ENCODE measurements at regions of chr15 and their contacts with region 1.

Region 1: DNA sequence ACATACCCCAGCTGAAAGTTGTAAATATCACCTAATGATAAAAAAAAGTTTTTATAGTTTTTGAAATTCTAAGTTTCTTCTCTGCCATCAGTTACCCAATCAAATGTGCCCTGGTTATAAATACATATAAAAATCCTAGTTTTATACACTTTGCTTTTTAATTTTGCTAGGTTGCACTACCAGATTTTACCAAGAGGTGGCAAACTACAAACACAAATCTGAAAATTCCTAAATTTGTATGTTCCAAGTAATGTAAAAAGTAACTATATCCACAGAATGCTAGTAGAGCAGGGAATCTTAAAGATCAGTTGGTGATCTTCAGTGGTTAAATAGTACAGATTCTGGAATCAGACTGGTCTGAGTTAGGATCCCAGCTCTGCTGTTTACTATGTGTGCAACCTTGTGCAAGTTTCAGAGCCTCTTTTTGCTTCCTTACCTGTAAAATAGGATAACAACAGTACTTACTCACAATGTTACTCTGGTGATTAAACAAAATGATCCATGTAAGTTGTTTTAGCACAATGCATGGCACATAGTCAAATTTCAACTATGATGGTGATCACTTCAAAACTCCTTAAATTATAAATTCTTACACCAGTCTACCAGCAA is 11.0 kb downstream of the TRPM7 start:
- DNase-seq: no peak
- ATAC-seq: no peak
- H3K4me3 ChIP-seq: no peak overlapping the region
- H3K27ac ChIP-seq: no peak overlapping the region
- H3K4me1 ChIP-seq: peaks cover 2 to 50% (median 19%) of the 10 kb centered on the region in 9 donors
- H3K27me3 ChIP-seq: no peaks in the 10 kb centered on the region
- CTCF ChIP-seq: peak; percentile 55 to 84 (median 79)

Region 2: DNA sequence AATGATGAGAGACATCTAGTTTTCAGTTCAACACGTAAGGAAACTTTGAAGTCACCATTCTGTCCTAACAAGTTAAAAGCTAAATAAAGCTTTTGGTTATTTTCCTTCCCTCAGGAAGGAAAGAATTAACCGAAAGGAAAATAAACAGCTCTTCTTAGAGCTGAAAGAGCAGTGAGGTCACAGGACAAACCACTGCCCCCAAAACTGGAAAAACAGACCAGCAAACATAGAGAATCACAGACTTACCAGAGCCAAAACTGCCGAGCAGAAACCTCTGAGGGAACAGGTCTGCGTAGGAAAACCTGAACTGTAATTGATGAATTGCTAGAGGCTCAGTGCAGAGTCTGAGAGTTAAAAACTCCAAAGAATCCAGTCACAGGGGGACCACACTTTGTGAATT is 143.9 kb before region 1 on chr15:
- intact Hi-C with region 1: no loop called
- DNase-seq: no peak
- ATAC-seq: no peak
- H3K4me3 ChIP-seq: no peak overlapping the region
- H3K27ac ChIP-seq: no peak overlapping the region
- H3K4me1 ChIP-seq: no peaks in the 10 kb centered on the region
- H3K27me3 ChIP-seq: no peaks in the 10 kb centered on the region
- CTCF ChIP-seq: no peak

Region 3: GRCh38 chr15:50712018-50712417 is 36.4 kb after region 1 on chr15:
- intact Hi-C with region 1: loop called in 2 of 10 experiments (anchors 5 kb)
- DNase-seq: no peak
- ATAC-seq: no peak
- H3K4me3 ChIP-seq: no peak overlapping the region
- H3K27ac ChIP-seq: peak overlapping the region; percentile 11 to 90 (median 68)
- H3K4me1 ChIP-seq: peaks cover 0 to 29% (median 0%) of the 10 kb centered on the region in 9 donors
- H3K27me3 ChIP-seq: no peaks in the 10 kb centered on the region
- CTCF ChIP-seq: no peak

Region 4: GRCh38 chr15:50718700-50719125 is 43.1 kb after region 1 on chr15:
- intact Hi-C with region 1: loop called in 2 of 10 experiments (anchors 5 kb)
- DNase-seq: no peak
- ATAC-seq: peak in 1 of 8 donors; percentile 31
- H3K4me3 ChIP-seq: no peak overlapping the region
- H3K27ac ChIP-seq: peak overlapping the region in 2 of 10 donors; percentile 2 to 12
- H3K4me1 ChIP-seq: peaks cover 0 to 4% (median 0%) of the 10 kb centered on the region in 9 donors
- H3K27me3 ChIP-seq: no peaks in the 10 kb centered on the region
- CTCF ChIP-seq: no peak

Region 5: DNA sequence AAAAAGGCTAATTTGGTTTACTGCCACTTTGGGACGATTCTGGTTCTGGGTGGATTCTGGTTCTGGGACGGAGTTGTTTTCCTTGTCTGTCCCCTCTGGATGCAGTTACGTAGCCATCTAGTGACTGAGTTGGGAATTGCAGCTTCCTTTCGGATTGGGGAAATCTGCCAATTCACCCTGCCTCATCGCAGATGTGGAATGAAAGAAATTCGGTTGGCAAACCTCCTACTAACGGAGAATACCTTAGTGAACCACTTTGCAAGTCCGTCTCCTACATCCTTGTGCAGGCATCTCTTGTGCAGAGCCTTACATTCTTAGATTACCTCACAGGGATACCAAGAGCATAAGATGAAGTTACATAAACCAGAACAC is 201.3 kb after region 1 on chr15:
- intact Hi-C with region 1: loop called in 8 of 10 experiments (anchors 1 to 10 kb)
- DNase-seq: peak in 1 of 2 donors; percentile 84
- ATAC-seq: peak; percentile 44 to 84 (median 77)
- H3K4me3 ChIP-seq: peak overlapping the region in 9 of 10 donors; percentile 14 to 57 (median 45)
- H3K27ac ChIP-seq: peak overlapping the region in 3 of 10 donors; percentile 34 to 70 (median 35)
- H3K4me1 ChIP-seq: peaks cover 0 to 57% (median 0%) of the 10 kb centered on the region in 9 donors
- H3K27me3 ChIP-seq: no peaks in the 10 kb centered on the region
- CTCF ChIP-seq: peak; percentile 92 to 98 (median 95)

Region 6: DNA sequence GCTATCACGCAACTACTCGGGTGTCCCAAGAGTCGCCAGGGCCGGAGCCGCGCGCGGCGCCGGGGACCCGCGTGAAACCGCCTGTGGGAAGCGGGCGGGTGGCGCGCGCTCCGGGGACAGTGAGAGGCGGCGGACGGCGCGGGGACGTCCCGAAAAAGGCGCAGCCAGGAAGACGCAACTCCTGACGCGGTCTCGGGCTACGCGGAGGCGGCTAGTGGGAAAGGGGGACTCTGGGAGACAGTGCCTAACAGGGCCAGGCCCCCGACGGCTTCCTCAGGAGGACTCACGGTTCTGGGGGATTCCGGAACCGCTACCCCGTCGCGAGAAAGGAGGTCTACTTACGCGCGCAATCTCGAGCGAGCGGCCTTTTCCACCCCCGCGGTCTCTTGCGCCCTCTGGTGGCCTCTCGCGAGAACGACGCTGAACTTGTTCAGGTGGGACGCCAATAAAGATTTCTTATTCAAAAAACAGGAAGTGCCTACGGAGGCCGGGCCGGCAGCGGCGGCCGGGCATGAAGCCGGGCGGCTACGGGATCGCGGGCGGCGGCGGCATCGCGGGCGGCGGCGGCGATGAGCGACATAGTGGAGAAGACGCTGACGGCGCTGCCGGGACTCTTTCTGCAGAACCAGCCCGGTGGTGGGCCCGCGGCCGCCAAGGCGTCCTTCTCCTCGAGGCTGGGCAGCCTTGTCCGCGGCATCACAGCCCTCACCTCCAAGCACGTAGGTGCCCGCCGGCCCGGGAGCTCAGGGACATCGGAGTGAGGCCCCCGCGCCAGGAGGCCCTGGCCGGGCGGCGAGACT is 232.8 kb after region 1 on chr15 and contains the start of gene AP4E1:
- intact Hi-C with region 1: loop called in 3 of 10 experiments (anchors 5 to 10 kb)
- DNase-seq: peak; percentile 92 to 93
- ATAC-seq: peak; percentile 88 to 96 (median 91)
- H3K4me3 ChIP-seq: peak within 1 kb of the TSS; percentile 75 to 98 (median 89)
- H3K27ac ChIP-seq: peak within 1 kb of the TSS; percentile 79 to 97 (median 92)
- H3K4me1 ChIP-seq: peaks cover 0 to 43% (median 35%) of the 10 kb centered on the region in 9 donors
- H3K27me3 ChIP-seq: no peaks in the 10 kb centered on the region
- CTCF ChIP-seq: peak; percentile 93 to 98 (median 97)
- total RNA-seq, gene AP4E1: 6.5 to 11.1 (median 8.9) TPM

Measured in heart right ventricle (tissue), 16 donors.